GM18951 (cell line): ENCODE measurements at regions of chr11 and their contacts with region 1.

Region 1: DNA sequence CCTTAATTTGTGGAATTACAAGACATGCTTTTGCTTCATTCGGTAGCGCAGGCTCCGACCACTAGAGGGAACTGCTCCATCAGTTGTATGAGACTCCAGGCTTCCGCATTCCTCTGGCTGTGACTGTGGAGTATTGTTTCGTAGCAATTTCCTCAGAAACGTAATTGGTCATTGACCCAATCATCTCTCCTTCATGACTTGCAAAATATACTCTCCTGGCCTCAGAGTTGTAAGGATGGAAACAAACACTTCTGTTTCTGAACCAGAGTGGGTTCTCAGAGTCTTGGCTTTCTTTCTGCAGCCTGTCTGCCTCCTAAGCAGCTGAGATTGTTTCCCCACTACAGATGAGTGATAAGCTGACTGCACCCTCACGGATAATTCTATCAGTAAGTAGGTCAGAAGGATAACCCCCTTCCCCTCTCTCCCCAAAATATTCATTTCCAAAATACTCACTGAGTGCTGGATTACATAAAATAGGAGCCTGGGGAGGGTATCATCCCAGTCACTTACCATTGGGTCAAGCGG is 146.8 kb upstream of the ZC3H12C start:
- POLR2A ChIP-seq: peak; percentile 33

Region 2: GRCh38 chr11:109564241-109564640 is 382.1 kb before region 1 on chr11:
- in situ Hi-C with region 1: no loop called
- POLR2A ChIP-seq: no peak

Region 3: DNA sequence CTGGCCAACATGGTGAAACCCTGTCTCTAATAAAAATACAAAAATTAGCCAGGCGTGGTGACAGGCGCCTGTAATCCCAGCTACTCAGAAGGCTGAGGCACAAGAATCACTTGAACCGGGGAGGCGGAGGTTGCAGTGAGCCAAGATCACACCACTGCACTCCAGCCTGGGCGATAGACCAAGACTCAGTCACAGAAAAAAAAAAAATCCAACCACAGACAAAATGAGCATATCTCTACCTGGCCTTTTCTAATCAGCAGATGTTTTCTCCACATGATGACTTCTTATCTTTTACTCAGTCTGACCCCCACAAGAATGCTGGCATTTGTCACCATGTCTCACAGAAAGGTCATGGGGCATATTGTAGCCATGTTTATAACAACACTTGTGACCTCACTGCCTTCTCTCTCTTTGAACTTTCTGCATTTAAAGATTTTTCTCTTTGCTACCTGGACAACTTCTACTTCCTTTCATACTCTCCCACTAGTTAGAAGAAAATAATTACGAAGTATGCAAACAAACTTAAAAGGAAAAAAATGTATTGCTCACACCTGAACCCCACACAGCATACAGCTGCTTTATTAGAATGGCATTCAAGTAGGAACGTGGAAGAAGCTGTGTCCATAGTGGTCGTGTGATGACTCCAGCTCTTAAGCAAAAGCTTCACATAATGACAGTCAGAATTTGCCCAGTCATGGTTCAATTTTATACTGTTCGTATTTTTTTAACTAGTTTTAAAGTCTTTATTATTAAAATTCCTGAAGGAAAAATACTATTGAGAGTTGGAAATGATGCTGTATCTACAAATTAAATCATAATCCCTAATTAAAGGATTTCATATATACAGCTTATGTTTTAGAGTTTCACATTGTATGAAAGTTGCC is 212.2 kb after region 1 on chr11:
- in situ Hi-C with region 1: loop called (anchors 10 kb)
- POLR2A ChIP-seq: no peak